ENCODE measurements at regions of chr4 and their contacts with region 1.

Region 1: GRCh38 chr4:153344131-153345010 is at the start of gene MND1:
- DNase-seq: peak; percentile 94
- ATAC-seq: peak; percentile 94
- H3K4me3 Mint-ChIP-seq: peak within 1 kb of the TSS; percentile 97
- H3K27ac Mint-ChIP-seq: peak within 1 kb of the TSS; percentile 94
- H3K4me1 Mint-ChIP-seq: peaks cover 47% of the 10 kb centered on the region
- H3K27me3 Mint-ChIP-seq: peaks cover 14% of the 10 kb centered on the region
- total RNA-seq, gene MND1: 37.4 to 38.3 TPM

Region 2: DNA sequence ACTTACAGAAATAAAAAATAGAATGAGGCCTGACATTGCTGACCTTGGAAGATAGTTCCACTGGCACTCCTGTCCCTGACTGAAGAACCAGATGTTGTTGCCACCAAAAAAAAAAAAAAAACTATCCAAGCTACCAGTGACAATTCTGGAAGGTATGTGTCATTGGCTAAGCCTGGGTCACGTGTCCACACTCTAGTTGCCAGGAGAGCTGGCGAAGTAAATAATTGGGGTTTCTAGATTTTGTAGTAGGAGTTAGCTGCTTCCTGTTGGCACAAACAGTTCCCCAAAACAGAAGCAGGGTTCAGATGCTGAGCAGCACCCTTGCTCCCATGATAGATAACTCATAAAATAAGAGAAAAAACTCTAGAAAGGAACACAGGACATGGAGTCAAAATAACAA is 20.6 kb after region 1 on chr4:
- CTCF ChIA-PET with region 1: interaction called, 10 read pairs
- POLR2A ChIA-PET with region 1: interaction called, 3 read pairs
- DNase-seq: no peak
- ATAC-seq: no peak
- H3K4me3 Mint-ChIP-seq: no peak overlapping the region
- H3K27ac Mint-ChIP-seq: no peak overlapping the region
- H3K4me1 Mint-ChIP-seq: peaks cover 15% of the 10 kb centered on the region
- H3K27me3 Mint-ChIP-seq: no peaks in the 10 kb centered on the region

Region 3: DNA sequence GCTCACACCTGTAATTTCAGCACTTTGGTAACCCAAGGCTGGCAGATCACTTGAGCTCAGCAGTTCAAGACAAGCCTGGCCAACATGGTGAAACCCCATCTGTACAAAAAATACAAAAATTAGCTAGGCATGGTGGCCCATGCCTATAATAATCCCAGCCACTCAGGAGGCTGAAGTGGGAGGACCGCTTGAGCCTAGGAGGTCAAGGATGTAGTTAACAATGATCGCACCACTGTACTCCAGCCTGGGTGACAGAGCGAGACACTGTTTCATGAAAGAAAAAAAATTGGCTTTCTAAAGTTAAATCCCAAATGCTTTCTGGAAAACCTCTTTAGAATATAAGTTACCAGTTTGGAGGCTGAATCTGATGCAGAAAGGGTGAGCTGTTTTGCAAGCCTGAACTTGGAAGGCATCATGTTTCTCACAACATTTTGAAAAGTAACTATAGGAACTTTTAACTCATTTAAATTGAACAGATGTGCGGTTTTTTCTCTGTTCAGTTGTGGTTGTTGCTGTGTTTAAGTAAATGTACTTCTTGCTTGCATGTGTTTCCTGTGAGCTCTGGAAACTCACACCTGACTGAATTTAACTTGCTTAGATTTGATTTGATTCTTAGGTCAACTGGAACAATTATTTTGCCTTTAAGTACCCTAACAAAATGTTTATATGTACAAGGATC is 82.0 kb after region 1 on chr4:
- CTCF ChIA-PET with region 1: interaction called, 19 read pairs
- POLR2A ChIA-PET with region 1: no interaction called
- DNase-seq: peak; percentile 54
- ATAC-seq: peak; percentile 79
- H3K4me3 Mint-ChIP-seq: peak overlapping the region; percentile 55
- H3K27ac Mint-ChIP-seq: peak overlapping the region; percentile 90
- H3K4me1 Mint-ChIP-seq: peaks cover 72% of the 10 kb centered on the region
- H3K27me3 Mint-ChIP-seq: no peaks in the 10 kb centered on the region

Region 4: GRCh38 chr4:153432968-153433753 is 88.8 kb after region 1 on chr4:
- CTCF ChIA-PET with region 1: interaction called, 24 read pairs
- POLR2A ChIA-PET with region 1: interaction called, 8 read pairs
- DNase-seq: peak; percentile 90
- ATAC-seq: peak; percentile 82
- H3K4me3 Mint-ChIP-seq: peak overlapping the region; percentile 78
- H3K27ac Mint-ChIP-seq: peak overlapping the region; percentile 95
- H3K4me1 Mint-ChIP-seq: peaks cover 77% of the 10 kb centered on the region
- H3K27me3 Mint-ChIP-seq: no peaks in the 10 kb centered on the region

Region 5: GRCh38 chr4:153521999-153522801 is 177.8 kb after region 1 on chr4:
- CTCF ChIA-PET with region 1: interaction called, 10 read pairs
- POLR2A ChIA-PET with region 1: interaction called, 3 read pairs
- DNase-seq: peak; percentile 89
- ATAC-seq: peak; percentile 80
- H3K4me3 Mint-ChIP-seq: peak overlapping the region; percentile 70
- H3K27ac Mint-ChIP-seq: peak overlapping the region; percentile 96
- H3K4me1 Mint-ChIP-seq: peaks cover 95% of the 10 kb centered on the region
- H3K27me3 Mint-ChIP-seq: no peaks in the 10 kb centered on the region

Region 6: DNA sequence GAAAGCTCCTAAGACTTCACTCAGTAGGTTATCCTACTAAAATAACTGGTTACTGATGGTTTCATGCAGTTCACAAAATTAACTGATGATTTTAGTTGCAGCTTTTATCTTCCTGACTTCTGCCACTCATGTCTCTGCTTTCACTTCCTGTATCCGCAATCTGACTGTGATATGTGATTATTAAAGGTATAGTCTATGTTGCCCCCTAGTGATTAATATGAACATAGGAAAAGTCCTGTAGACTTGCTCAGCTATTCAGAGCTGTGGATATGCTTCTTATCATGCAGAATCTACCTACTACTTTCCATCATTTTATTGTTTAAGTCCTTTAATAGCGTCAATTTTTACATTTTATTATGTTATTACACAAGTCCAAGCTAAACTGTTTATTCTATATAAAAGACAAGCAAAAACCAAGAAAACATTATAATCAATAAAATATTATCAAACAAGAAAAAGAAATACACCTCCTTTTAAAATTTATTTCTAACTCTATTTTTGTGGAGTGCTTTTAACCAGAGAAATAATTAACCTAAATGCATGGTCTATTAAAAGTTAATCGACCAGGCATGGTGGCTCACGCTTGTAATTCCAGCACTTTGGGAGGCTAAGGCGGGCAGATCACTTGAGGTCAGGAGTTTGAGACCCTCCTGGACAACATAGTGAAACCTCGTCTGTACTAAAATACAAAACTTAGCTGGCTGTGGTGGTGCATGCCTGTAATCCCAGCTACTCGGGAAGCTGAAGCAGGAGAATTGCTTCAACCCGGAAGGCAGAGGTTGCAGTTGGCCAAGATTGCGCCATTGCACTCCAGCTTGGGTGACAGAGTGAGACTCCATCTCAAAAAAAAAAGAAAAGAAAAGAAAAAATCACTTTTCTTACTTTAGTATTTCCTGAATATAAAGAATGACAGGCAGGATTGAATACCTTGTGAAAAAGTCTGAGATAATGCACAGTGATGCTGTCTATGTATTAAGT is 299.3 kb after region 1 on chr4:
- CTCF ChIA-PET with region 1: interaction called, 20 read pairs
- POLR2A ChIA-PET with region 1: interaction called, 4 read pairs
- DNase-seq: no peak
- ATAC-seq: peak; percentile 89
- H3K4me3 Mint-ChIP-seq: no peak overlapping the region
- H3K27ac Mint-ChIP-seq: peak overlapping the region; percentile 50
- H3K4me1 Mint-ChIP-seq: peaks cover 23% of the 10 kb centered on the region
- H3K27me3 Mint-ChIP-seq: no peaks in the 10 kb centered on the region

Region 7: GRCh38 chr4:153649572-153649991 is 305.2 kb after region 1 on chr4:
- CTCF ChIA-PET with region 1: interaction called, 16 read pairs
- POLR2A ChIA-PET with region 1: no interaction called
- DNase-seq: no peak
- ATAC-seq: no peak
- H3K4me3 Mint-ChIP-seq: no peak overlapping the region
- H3K27ac Mint-ChIP-seq: no peak overlapping the region
- H3K4me1 Mint-ChIP-seq: peaks cover 29% of the 10 kb centered on the region
- H3K27me3 Mint-ChIP-seq: peaks cover 1% of the 10 kb centered on the region